ENCODE measurements at regions of chr16 and their contacts with region 1.

Region 1: GRCh38 chr16:75566040-75566810 is at the start of gene GABARAPL2:
- DNase-seq: peak; percentile 87 to 97 (median 92)
- ATAC-seq: peak; percentile 90
- H3K4me3 ChIP-seq: peak within 1 kb of the TSS; percentile 93
- H3K4me3 Mint-ChIP-seq: peak within 1 kb of the TSS; percentile 88 to 100 (median 96)
- H3K27ac ChIP-seq: peak within 1 kb of the TSS; percentile 90
- H3K27ac Mint-ChIP-seq: peak within 1 kb of the TSS; percentile 79 to 100 (median 92)
- H3K4me1 ChIP-seq: peaks cover 20 to 27% of the 10 kb centered on the region in 2 donors
- H3K4me1 Mint-ChIP-seq: peaks cover 25 to 50% (median 47%) of the 10 kb centered on the region in 7 donors
- H3K27me3 ChIP-seq: no peaks in the 10 kb centered on the region
- H3K27me3 Mint-ChIP-seq: peaks cover 8 to 16% (median 13%) of the 10 kb centered on the region in 5 donors
- total RNA-seq, gene GABARAPL2: 57.9 to 81.2 (median 75.6) TPM

Region 2: DNA sequence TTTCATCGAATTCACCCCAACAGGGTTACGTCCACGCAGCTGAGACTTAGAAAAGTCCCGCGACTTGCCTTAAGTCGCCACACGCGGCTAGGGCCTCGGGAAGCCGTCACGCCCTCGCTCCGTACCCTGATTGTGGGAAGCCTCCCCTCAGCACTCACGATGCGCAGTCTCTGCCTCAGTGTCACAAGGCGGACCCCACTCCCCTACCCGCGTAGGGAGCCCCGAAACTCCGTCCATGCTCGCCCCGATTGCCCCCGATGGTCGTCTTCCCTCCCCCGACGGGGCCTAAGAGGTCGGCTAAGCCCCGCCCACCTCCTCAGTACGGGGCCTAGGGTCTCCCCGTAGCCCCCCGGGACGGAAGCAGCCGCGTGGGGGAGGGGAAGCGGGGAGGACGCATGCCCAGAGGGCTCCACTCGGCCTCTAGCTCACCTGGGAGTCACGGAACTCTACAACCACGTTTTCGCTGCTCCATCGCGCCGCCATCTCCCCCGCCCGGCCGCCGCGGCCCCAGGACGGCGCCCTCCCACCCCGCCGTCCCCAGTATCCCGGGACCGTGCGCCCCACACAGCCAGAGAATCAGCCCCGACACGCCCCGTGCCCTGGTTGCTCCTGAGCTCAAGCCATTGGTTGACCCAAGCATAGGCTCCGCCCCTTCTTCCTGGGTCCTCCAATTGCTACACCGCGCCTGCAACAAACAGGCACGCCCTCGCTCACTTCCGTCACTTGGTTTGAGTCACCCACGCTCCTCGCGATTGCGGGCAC is 581.5 kb before region 1 on chr16 and contains the start of gene WDR59:
- CTCF ChIA-PET with region 1: no interaction called
- POLR2A ChIA-PET with region 1: no interaction called
- intact Hi-C with region 1: loop called (anchors 1 to 5 kb)
- DNase-seq: peak; percentile 87 to 99 (median 98)
- ATAC-seq: peak; percentile 100
- H3K4me3 ChIP-seq: peak within 1 kb of the TSS; percentile 98
- H3K4me3 Mint-ChIP-seq: peak within 1 kb of the TSS; percentile 90 to 98 (median 95)
- H3K27ac ChIP-seq: peak within 1 kb of the TSS; percentile 86
- H3K27ac Mint-ChIP-seq: peak within 1 kb of the TSS; percentile 72 to 96 (median 92)
- H3K4me1 ChIP-seq: peaks cover 5 to 6% of the 10 kb centered on the region in 2 donors
- H3K4me1 Mint-ChIP-seq: peaks cover 0 to 27% (median 23%) of the 10 kb centered on the region in 7 donors
- H3K27me3 ChIP-seq: no peaks in the 10 kb centered on the region
- H3K27me3 Mint-ChIP-seq: no peaks in the 10 kb centered on the region
- total RNA-seq, gene WDR59: 82.7 to 130 (median 84.7) TPM

Region 3: DNA sequence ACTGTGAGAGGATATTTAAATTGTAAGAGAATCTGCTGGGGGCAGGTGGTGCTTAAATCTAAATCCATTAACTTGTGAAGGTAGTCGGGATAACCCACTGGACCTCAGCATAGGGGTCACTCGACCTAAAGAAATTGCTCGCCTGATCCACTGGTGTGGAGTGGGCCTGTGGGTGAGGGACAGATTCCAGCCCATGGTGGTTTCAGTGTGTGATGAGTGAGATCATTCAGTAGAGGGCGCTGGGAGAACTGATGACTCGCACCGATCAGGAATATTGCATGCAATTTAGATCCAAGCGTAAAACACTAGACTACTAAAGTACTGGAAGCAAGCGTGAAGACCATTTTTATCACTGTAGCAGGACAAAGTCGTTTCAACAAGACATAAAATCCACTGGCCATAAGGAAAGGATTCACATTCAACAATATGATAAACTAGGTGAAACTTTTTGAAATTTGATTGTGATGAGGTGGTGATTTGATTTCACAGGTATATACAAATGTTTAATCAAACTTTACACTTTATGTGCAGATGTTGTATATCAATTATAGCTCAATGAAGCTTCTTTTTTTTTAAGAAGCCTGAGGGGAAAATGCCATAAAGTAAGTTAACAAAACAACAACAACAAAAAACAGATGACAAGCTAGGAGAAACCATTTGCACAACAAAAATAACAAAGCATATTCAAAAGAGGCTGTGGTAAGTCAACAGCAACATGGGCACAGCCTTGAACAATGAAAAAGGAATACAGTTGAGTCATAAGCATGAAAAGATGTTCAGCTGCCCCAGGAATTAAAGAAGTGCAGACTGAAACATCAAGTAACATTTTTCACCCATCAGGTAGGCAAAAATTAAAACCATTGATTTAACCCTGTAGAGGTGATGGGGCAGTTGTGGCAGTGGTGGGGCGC is 94.2 kb before region 1 on chr16:
- CTCF ChIA-PET with region 1: no interaction called
- POLR2A ChIA-PET with region 1: no interaction called
- intact Hi-C with region 1: loop called in 1 of 2 experiments (anchors 1 kb)
- DNase-seq: peak in 6 of 9 donors; percentile 15 to 48 (median 38)
- ATAC-seq: peak; percentile 91
- H3K4me3 ChIP-seq: no peak overlapping the region
- H3K4me3 Mint-ChIP-seq: no peak overlapping the region
- H3K27ac ChIP-seq: no peak overlapping the region
- H3K27ac Mint-ChIP-seq: peak overlapping the region in 1 of 9 donors; percentile 81
- H3K4me1 ChIP-seq: no peaks in the 10 kb centered on the region
- H3K4me1 Mint-ChIP-seq: peaks cover 0 to 6% (median 4%) of the 10 kb centered on the region in 7 donors
- H3K27me3 ChIP-seq: no peaks in the 10 kb centered on the region
- H3K27me3 Mint-ChIP-seq: peaks cover 0 to 5% (median 0%) of the 10 kb centered on the region in 5 donors

Region 4: DNA sequence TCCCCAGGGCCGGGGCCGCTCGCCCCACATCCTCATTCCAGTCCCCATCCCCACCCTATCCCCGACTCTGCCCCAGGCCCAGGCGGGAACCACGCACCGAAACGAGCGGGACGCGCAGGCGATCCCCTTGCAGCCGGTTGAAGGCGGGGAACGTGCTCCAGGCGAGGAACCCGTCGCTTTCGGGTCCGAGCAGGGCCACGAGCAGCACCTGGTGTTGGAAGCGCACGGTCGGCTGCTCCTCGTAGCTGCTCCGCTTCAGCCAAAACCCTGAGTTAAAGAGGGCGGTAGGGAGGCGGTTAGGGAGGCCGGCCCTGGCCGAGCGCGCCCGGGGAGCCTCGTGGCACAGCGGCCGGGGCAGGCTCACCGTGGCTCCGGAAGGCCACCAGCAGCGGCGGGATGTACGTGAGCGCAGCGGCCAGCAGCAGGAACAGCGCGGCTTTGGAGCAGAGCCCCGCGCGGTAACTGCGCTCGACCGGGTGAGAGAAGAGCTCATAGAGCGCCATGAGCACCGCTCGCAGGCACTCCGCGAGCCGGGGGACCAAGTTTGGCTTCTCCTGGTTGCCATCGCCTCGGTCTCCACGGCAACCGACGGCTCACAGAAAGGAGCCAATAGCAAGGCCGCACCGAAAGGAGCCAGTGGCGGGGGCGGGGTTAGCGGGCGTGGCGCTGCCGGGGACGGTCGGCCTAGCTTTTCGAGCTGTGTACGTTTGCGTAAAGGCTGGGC is 10.4 kb before region 1 on chr16 and contains the start of gene TMEM231:
- CTCF ChIA-PET with region 1: interaction called, 4 read pairs
- POLR2A ChIA-PET with region 1: interaction called, 36 read pairs
- intact Hi-C with region 1: loop called (anchors 1 kb)
- DNase-seq: peak; percentile 91 to 97 (median 93)
- ATAC-seq: peak; percentile 98
- H3K4me3 ChIP-seq: peak within 1 kb of the TSS; percentile 84
- H3K4me3 Mint-ChIP-seq: peak within 1 kb of the TSS; percentile 74 to 93 (median 88)
- H3K27ac ChIP-seq: peak within 1 kb of the TSS; percentile 66
- H3K27ac Mint-ChIP-seq: peak within 1 kb of the TSS; percentile 81 to 97 (median 89)
- H3K4me1 ChIP-seq: peaks cover 10% of the 10 kb centered on the region in 2 donors
- H3K4me1 Mint-ChIP-seq: peaks cover 5 to 14% (median 10%) of the 10 kb centered on the region in 7 donors
- H3K27me3 ChIP-seq: no peaks in the 10 kb centered on the region
- H3K27me3 Mint-ChIP-seq: peaks cover 0 to 33% (median 5%) of the 10 kb centered on the region in 5 donors
- total RNA-seq, gene TMEM231: 1.5 to 3.9 (median 3.4) TPM

Measured in naive thymus-derived CD4-positive, alpha-beta T cell (primary cell).